CD14-positive monocyte (primary cell): ENCODE measurements at regions of chr3 and their contacts with region 1.

Region 1: DNA sequence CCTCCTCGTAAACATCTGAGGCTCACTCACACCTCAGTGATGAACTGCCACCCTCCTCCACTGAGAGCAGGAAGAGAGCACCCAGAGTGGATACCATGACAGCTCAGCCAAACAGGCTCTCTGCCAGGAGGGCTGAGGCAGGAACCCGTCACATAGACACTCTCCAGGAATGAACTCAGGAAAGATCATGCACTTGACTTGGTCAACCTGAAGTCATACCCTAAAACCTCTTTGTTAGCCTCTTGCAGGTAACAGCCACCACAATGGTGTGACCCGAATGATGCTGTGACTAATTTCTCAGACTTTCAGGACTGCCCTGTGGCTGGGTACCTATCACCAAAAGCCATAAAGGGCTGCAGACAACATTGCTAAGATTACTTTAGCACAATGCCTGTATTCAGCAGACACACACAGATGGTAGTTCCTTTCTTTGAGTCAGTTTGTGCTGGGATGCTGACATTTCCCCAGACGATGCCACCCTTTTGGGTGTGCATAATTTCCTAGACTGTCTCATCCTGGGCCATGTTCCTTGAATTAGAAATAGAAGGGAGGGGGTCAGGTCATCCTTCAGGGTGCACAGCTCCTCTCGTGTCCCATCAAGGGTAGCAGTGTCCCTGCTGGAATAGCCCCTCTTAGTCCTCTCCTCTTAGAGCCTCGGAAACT is 30.3 kb downstream of the CX3CR1 start:
- DNase-seq: peak in 2 of 3 donors; percentile 19 to 20
- H3K4me3 ChIP-seq: peak overlapping the region in 1 of 3 experiments; percentile 57
- H3K4me3 Mint-ChIP-seq: peak overlapping the region; percentile 20 to 53
- H3K27ac ChIP-seq: peak overlapping the region; percentile 52 to 80
- H3K27ac Mint-ChIP-seq: peak overlapping the region; percentile 79 to 95 (median 91)
- H3K4me1 ChIP-seq: peaks cover 70 to 81% of the 10 kb centered on the region in 2 donors
- H3K4me1 Mint-ChIP-seq: peaks cover 82% of the 10 kb centered on the region
- H3K27me3 ChIP-seq: no peaks in the 10 kb centered on the region
- H3K27me3 Mint-ChIP-seq: peaks cover 0 to 6% (median 1%) of the 10 kb centered on the region in 3 donors
- CTCF ChIP-seq: no peak

Region 2: GRCh38 chr3:39279745-39280517 is 30.3 kb after region 1 on chr3 and contains the start of gene CX3CR1:
- intact Hi-C with region 1: loop called in 1 of 2 experiments (anchors 5 kb)
- DNase-seq: peak in 2 of 3 donors; percentile 23 to 35
- H3K4me3 ChIP-seq: peak within 1 kb of the TSS; percentile 46 to 97 (median 83)
- H3K4me3 Mint-ChIP-seq: peak within 1 kb of the TSS; percentile 95 to 100
- H3K27ac ChIP-seq: peak within 1 kb of the TSS; percentile 71 to 80
- H3K27ac Mint-ChIP-seq: peak within 1 kb of the TSS; percentile 82 to 95 (median 93)
- H3K4me1 ChIP-seq: peaks cover 73 to 80% of the 10 kb centered on the region in 2 donors
- H3K4me1 Mint-ChIP-seq: peaks cover 85% of the 10 kb centered on the region
- H3K27me3 ChIP-seq: no peaks in the 10 kb centered on the region
- H3K27me3 Mint-ChIP-seq: peaks cover 0 to 2% (median 0%) of the 10 kb centered on the region in 3 donors
- CTCF ChIP-seq: no peak
- polyA plus RNA-seq, gene CX3CR1: 25.9 to 405 (median 184) TPM